H1 (cell line): ENCODE measurements at regions of chr3 and their contacts with region 1.

Region 1: GRCh38 chr3:24736701-24737100 is 242.1 kb upstream of the THRB start:
- DNase-seq: no peak
- H3K4me3 ChIP-seq: no peak overlapping the region
- H3K27ac ChIP-seq: no peak overlapping the region
- H3K4me1 ChIP-seq: no peaks in the 10 kb centered on the region; a peak in 1 of 7 replicates
- H3K27me3 ChIP-seq: no peaks in the 10 kb centered on the region
- CTCF ChIP-seq: no peak
- EP300 ChIP-seq: no peak
- POLR2A ChIP-seq: no peak
- RAD21 ChIP-seq: no peak

Region 2: DNA sequence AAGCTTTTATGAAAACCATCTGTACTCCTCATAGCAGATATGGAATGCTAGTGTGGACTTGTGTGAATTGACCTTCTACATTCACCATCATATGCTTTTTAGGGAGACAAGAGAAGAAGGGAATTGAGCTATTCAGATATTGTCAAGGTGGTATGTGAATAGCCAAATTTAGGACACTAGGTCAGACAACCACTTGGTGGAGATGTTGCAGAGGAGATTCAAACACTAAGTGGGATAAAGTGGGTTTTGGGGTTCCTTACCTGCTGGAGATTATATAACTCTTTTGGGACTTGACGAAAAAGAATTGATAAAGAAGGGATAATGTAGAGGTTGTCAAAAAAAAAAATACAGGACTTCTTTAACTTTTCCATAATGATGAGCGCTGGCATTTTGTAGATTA is 10.3 kb before region 1 on chr3:
- CTCF ChIA-PET with region 1: interaction called, 12 read pairs
- POLR2A ChIA-PET with region 1: no interaction called
- DNase-seq: no peak
- H3K4me3 ChIP-seq: no peak overlapping the region
- H3K27ac ChIP-seq: no peak overlapping the region
- H3K4me1 ChIP-seq: no peaks in the 10 kb centered on the region
- H3K27me3 ChIP-seq: no peaks in the 10 kb centered on the region
- CTCF ChIP-seq: peak in 1 of 3 experiments; percentile 33; a peak in 1 of 4 replicates
- EP300 ChIP-seq: no peak
- POLR2A ChIP-seq: no peak
- RAD21 ChIP-seq: peak; percentile 61 to 66

Region 3: GRCh38 chr3:24923570-24923969 is 186.9 kb after region 1 on chr3:
- CTCF ChIA-PET with region 1: no interaction called
- POLR2A ChIA-PET with region 1: no interaction called
- DNase-seq: no peak
- H3K4me3 ChIP-seq: no peak overlapping the region
- H3K27ac ChIP-seq: no peak overlapping the region
- H3K4me1 ChIP-seq: no peaks in the 10 kb centered on the region
- H3K27me3 ChIP-seq: peaks cover 0 to 2% (median 0%) of the 10 kb centered on the region in 4 experiments; a peak in 1 of 7 replicates
- CTCF ChIP-seq: no peak
- EP300 ChIP-seq: no peak
- POLR2A ChIP-seq: no peak
- RAD21 ChIP-seq: no peak